B cell (primary cell): ENCODE measurements at regions of chr11 and their contacts with region 1.

Region 1: DNA sequence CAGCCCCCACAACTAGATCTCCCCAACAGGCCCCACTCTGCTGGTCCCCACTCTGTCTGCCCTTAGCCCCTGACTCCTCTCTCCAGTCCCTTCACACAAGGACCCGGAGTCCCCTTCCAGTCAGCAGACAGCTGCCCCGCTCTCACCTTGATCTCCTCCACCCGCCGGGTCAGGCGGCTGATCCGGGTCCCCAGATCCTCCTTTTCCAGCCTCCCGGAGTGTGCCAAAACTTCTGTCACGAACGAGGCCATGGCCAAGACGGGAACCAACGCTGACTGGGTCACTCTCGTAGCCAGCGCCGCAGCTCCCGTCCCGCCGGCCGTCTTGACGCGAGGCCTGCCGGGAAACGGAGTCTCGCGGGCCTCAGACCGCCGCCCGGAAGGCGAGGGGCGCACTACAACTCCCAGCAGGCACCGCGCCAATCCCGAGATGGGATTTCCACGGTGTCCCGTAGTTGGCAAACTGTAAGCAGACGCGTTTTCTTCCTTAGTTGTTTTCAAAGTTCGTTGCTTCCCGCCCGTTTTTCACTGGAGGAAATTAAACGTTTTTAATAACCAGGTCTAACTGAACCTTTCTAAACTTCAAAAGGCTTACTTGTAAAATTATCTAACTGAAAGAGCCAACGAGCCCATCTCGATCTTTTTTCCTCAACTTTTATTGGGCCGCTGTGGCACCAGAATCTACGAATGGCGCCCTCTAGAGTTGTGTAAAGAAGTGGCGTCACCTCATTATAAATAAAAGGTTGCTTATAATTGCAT is at the start of gene ZW10:
- DNase-seq: peak; percentile 94
- ATAC-seq: peak; percentile 96
- H3K4me3 ChIP-seq: peak within 1 kb of the TSS; percentile 78 to 99 (median 88)
- H3K4me3 Mint-ChIP-seq: peak within 1 kb of the TSS; percentile 97
- H3K27ac ChIP-seq: peak within 1 kb of the TSS; percentile 55 to 79
- H3K27ac Mint-ChIP-seq: peak within 1 kb of the TSS; percentile 94
- H3K4me1 ChIP-seq: peaks cover 0 to 12% of the 10 kb centered on the region in 2 donors
- H3K4me1 Mint-ChIP-seq: peaks cover 24% of the 10 kb centered on the region
- H3K27me3 ChIP-seq: peaks cover 0 to 2% (median 0%) of the 10 kb centered on the region in 4 experiments
- H3K27me3 Mint-ChIP-seq: peaks cover 9% of the 10 kb centered on the region
- CTCF ChIP-seq: peak; percentile 94
- total RNA-seq, gene ZW10: 11.7 and 11.9 TPM in 2 replicates

Region 2: GRCh38 chr11:112086422-112087191 is 1687.0 kb before region 1 on chr11 and contains the starts of genes SDHD and TIMM8B:
- CTCF ChIA-PET with region 1: no interaction called
- POLR2A ChIA-PET with region 1: no interaction called
- intact Hi-C with region 1: loop called (anchors 2 kb)
- DNase-seq: peak; percentile 98
- ATAC-seq: peak; percentile 89
- H3K4me3 ChIP-seq: peak within 1 kb of the TSS; percentile 73 to 100 (median 97)
- H3K4me3 Mint-ChIP-seq: peak within 1 kb of the TSS; percentile 89
- H3K27ac ChIP-seq: peak within 1 kb of the TSS; percentile 77 to 91
- H3K27ac Mint-ChIP-seq: peak within 1 kb of the TSS; percentile 93
- H3K4me1 ChIP-seq: peaks cover 18 to 21% of the 10 kb centered on the region in 2 donors
- H3K4me1 Mint-ChIP-seq: peaks cover 42% of the 10 kb centered on the region
- H3K27me3 ChIP-seq: no peaks in the 10 kb centered on the region
- H3K27me3 Mint-ChIP-seq: no peaks in the 10 kb centered on the region
- CTCF ChIP-seq: peak; percentile 26
- total RNA-seq, gene SDHD: 55.0 and 57.7 TPM in 2 replicates
- total RNA-seq, gene TIMM8B: 22.4 and 25.5 TPM in 2 replicates

Region 3: DNA sequence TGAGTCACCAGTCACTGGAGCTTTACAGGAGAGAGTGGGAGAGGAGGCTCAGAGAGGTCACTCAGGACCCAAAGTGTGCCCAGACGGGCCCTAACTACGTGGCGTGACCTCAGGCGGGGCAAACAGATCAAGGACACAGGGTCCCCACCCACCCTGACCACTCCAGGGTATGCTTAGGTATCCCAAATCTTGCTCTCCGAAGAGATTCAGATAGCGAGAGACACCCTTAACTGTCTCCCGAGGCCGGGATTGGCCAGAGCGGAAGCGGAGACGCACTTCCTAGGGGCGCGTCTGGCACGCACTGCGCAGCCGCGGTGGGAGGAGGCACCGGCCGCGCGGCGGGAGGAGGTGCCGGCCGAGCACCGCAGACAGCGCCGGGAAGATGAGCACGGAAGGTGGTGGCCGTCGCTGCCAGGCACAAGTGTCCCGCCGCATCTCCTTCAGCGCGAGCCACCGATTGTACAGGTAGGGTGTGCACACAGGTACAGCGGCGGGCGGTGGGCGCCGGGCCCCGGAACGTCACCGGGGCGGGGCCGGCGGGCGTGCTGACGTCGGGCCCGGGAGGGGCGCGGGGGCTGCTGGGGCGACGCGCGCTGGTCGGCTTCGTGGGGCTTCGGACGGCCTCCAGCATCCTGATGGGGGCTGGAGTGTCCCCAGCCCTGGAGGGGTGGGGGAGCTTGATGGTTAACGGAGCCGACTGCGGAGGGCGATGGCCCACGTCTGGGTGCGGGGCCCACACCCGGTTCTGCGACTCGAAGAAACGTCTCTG is 1547.3 kb before region 1 on chr11 and contains the start of gene PTS:
- CTCF ChIA-PET with region 1: no interaction called
- POLR2A ChIA-PET with region 1: no interaction called
- intact Hi-C with region 1: loop called (anchors 2 kb)
- DNase-seq: peak; percentile 94
- ATAC-seq: peak; percentile 90
- H3K4me3 ChIP-seq: peak within 1 kb of the TSS; percentile 82 to 98 (median 92)
- H3K4me3 Mint-ChIP-seq: peak within 1 kb of the TSS; percentile 95
- H3K27ac ChIP-seq: peak within 1 kb of the TSS; percentile 99
- H3K27ac Mint-ChIP-seq: peak within 1 kb of the TSS; percentile 99
- H3K4me1 ChIP-seq: peaks cover 10 to 18% of the 10 kb centered on the region in 2 donors
- H3K4me1 Mint-ChIP-seq: peaks cover 23% of the 10 kb centered on the region
- H3K27me3 ChIP-seq: no peaks in the 10 kb centered on the region
- H3K27me3 Mint-ChIP-seq: no peaks in the 10 kb centered on the region
- CTCF ChIP-seq: no peak
- total RNA-seq, gene PTS: 36.2 and 36.7 TPM in 2 replicates

Region 4: GRCh38 chr11:112289588-112290492 is 1483.8 kb before region 1 on chr11:
- CTCF ChIA-PET with region 1: no interaction called
- POLR2A ChIA-PET with region 1: no interaction called
- intact Hi-C with region 1: loop called (anchors 2 kb)
- DNase-seq: peak; percentile 88
- ATAC-seq: peak; percentile 98
- H3K4me3 ChIP-seq: peak overlapping the region in 4 of 5 experiments; percentile 40 to 62 (median 53)
- H3K4me3 Mint-ChIP-seq: peak overlapping the region; percentile 87
- H3K27ac ChIP-seq: peak overlapping the region in 1 of 2 donors; percentile 39
- H3K27ac Mint-ChIP-seq: peak overlapping the region; percentile 85
- H3K4me1 ChIP-seq: peaks cover 9 to 13% of the 10 kb centered on the region in 2 donors
- H3K4me1 Mint-ChIP-seq: peaks cover 11% of the 10 kb centered on the region
- H3K27me3 ChIP-seq: peaks cover 0 to 3% (median 0%) of the 10 kb centered on the region in 4 experiments
- H3K27me3 Mint-ChIP-seq: no peaks in the 10 kb centered on the region
- CTCF ChIP-seq: peak; percentile 89

Region 5: DNA sequence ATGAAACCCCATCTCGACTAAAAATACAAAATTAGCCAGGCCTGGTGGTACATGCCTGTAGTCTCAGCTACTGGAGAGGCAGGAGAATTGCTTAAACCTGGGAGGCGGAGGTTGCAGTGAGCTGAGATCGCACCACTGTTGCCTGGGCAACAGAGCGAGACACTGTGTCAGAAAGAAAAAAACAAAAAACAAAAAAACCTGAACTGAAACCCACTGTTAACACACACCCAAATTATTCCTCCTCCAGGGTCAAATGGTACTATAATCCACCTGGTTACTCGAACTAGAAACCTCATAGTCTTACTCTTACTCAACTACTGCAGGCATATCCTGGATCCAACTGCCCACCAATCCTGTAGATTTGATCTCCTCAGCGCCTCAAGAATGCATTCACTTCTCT is 66.2 kb after region 1 on chr11:
- CTCF ChIA-PET with region 1: no interaction called
- POLR2A ChIA-PET with region 1: no interaction called
- intact Hi-C with region 1: loop called (anchors 1 kb)
- DNase-seq: peak; percentile 85
- ATAC-seq: peak; percentile 93
- H3K4me3 ChIP-seq: peak overlapping the region in 1 of 5 experiments; percentile 52
- H3K4me3 Mint-ChIP-seq: peak overlapping the region; percentile 78
- H3K27ac ChIP-seq: peak overlapping the region; percentile 92
- H3K27ac Mint-ChIP-seq: peak overlapping the region; percentile 94
- H3K4me1 ChIP-seq: peaks cover 39 to 43% of the 10 kb centered on the region in 2 donors
- H3K4me1 Mint-ChIP-seq: peaks cover 30% of the 10 kb centered on the region
- H3K27me3 ChIP-seq: no peaks in the 10 kb centered on the region
- H3K27me3 Mint-ChIP-seq: no peaks in the 10 kb centered on the region
- CTCF ChIP-seq: no peak

Region 6: DNA sequence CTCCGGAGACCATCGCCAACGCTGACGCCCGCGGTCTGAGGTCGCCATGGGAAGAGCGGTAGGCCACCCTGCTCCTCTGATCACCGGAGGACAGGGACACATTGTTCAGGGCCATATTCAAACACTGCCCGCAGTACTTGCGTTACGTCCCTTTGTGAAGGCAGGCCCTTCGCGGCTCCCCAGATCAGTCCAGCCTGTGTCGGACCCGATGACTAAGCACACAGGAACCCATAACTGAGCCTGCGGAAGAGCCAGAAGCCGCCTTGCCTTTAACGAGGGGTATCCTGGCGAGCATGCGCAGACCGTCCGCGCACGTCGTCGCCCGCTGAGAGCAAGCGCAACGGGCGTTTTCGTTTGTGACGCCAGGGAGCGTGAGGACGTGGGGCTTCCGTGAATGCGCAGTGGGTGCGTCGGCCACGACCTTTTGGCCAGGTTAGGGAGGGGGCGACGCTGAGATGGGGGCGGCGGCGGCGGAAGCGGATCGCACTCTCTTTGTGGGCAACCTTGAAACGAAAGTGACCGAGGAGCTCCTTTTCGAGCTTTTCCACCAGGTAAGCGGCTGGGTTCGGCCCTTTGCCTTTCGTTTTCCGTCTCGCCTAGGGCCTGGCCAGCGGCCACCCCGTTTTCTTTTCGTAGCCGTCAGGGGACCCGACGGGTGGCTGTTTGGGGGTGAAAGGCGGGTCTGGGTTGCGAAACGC is 626.8 kb after region 1 on chr11 and contains the starts of genes C11orf71 and RBM7:
- CTCF ChIA-PET with region 1: no interaction called
- POLR2A ChIA-PET with region 1: no interaction called
- intact Hi-C with region 1: loop called (anchors 1 kb)
- DNase-seq: peak; percentile 99
- ATAC-seq: peak; percentile 94
- H3K4me3 ChIP-seq: peak within 1 kb of the TSS; percentile 72 to 98 (median 89)
- H3K4me3 Mint-ChIP-seq: peak within 1 kb of the TSS; percentile 99
- H3K27ac ChIP-seq: peak within 1 kb of the TSS; percentile 87 to 92
- H3K27ac Mint-ChIP-seq: peak within 1 kb of the TSS; percentile 98
- H3K4me1 ChIP-seq: peaks cover 21 to 28% of the 10 kb centered on the region in 2 donors
- H3K4me1 Mint-ChIP-seq: peaks cover 45% of the 10 kb centered on the region
- H3K27me3 ChIP-seq: no peaks in the 10 kb centered on the region
- H3K27me3 Mint-ChIP-seq: no peaks in the 10 kb centered on the region
- CTCF ChIP-seq: no peak
- total RNA-seq, gene C11orf71: 14.8 and 14.9 TPM in 2 replicates
- total RNA-seq, gene RBM7: 34.8 and 36.1 TPM in 2 replicates

Region 7: GRCh38 chr11:114439229-114440120 is 665.9 kb after region 1 on chr11 and contains the start of gene REXO2:
- CTCF ChIA-PET with region 1: no interaction called
- POLR2A ChIA-PET with region 1: no interaction called
- intact Hi-C with region 1: loop called (anchors 1 kb)
- DNase-seq: peak; percentile 95
- ATAC-seq: peak; percentile 99
- H3K4me3 ChIP-seq: peak within 1 kb of the TSS; percentile 48 to 95 (median 88)
- H3K4me3 Mint-ChIP-seq: peak within 1 kb of the TSS; percentile 99
- H3K27ac ChIP-seq: peak within 1 kb of the TSS in 1 of 2 donors; percentile 75
- H3K27ac Mint-ChIP-seq: peak within 1 kb of the TSS; percentile 92
- H3K4me1 ChIP-seq: peaks cover 12 to 13% of the 10 kb centered on the region in 2 donors
- H3K4me1 Mint-ChIP-seq: peaks cover 25% of the 10 kb centered on the region
- H3K27me3 ChIP-seq: no peaks in the 10 kb centered on the region
- H3K27me3 Mint-ChIP-seq: no peaks in the 10 kb centered on the region
- CTCF ChIP-seq: no peak
- total RNA-seq, gene REXO2: 27.7 and 34.3 TPM in 2 replicates